ENCODE measurements at regions of chr3 and their contacts with region 1.

Region 1: DNA sequence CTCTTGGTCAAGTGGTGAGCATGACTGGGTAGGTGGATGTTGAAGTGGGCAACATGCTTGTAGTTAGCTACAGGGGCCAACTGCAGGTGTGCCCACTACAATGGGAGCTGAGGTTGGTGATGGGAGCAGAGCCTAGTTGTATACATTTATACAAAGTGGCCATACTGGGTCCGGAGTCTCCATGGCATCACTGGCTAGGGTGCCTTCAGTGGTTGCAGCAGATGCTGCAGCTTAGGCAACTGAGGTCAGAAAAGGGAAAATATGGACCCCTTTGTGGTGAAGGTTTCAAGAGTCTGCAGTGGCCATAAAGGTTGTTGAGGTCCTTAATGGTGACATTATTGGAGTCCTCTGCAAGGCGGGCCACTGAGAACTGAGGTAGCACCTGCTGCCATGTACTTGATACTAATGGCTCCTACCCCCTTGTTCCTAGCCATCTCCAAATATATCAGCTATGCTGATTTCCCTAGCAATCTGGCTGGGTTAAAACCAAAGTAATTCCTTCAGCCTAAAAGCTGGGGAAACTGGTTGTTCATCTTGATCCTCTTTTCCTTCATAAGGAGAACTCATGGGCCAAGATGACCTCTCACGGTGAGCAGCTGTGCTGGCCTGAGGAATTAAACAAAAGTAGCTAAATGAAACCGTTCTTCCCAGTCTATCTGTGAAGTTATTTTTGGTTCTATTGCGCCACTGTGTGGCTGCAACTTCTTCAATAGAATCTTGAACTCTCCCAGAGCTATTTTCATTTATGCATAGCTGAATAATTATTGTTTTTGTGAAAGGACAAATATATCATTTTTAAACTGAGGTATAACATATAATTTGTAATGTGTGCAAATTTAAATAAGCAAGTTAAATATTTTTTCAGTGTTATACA is 76.0 kb upstream of the PLSCR4 start:
- DNase-seq: peak; percentile 39 to 42
- H3K4me3 ChIP-seq: no peak overlapping the region
- H3K4me3 Mint-ChIP-seq: no peak overlapping the region
- H3K27ac Mint-ChIP-seq: no peak overlapping the region
- H3K4me1 ChIP-seq: no peaks in the 10 kb centered on the region
- H3K4me1 Mint-ChIP-seq: peaks cover 6% of the 10 kb centered on the region
- H3K27me3 ChIP-seq: no peaks in the 10 kb centered on the region
- H3K27me3 Mint-ChIP-seq: no peaks in the 10 kb centered on the region
- CTCF ChIP-seq: peak; percentile 42

Region 2: DNA sequence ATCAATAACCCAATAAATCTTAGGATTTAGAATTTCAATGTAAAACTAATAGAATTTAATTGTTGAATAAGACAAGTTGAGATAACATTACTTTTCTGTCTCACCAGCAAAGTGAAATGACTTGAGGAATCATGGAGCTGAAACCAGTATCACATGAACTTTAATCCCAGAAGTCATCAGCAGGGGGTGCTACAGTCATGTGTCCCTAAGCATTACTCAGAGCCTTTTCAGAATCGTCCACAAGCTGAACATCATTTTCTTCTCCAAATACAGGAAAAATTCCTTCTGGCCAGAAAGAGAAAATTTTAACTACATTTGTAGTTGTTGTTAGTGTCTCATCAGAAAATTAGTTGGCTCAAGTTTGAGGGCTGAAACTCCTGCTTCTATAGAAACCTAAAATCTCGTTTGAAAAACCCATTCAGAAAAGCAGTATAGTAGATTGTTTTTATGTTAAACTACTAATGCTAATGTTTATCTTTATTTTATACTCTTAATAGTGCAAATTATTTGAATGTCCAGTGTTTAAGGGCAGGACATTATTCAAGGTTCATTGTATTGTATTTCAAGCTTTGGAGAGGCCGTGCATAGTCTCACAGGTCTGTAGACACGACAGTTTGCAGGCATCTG is 550.0 kb before region 1 on chr3:
- CTCF ChIA-PET with region 1: interaction called, 3 read pairs
- POLR2A ChIA-PET with region 1: no interaction called
- intact Hi-C with region 1: loop called (anchors 5 kb)
- DNase-seq: peak in 1 of 2 experiments; percentile 66
- H3K4me3 ChIP-seq: no peak overlapping the region
- H3K4me3 Mint-ChIP-seq: no peak overlapping the region
- H3K27ac Mint-ChIP-seq: no peak overlapping the region
- H3K4me1 ChIP-seq: no peaks in the 10 kb centered on the region
- H3K4me1 Mint-ChIP-seq: peaks cover 2% of the 10 kb centered on the region
- H3K27me3 ChIP-seq: no peaks in the 10 kb centered on the region
- H3K27me3 Mint-ChIP-seq: peaks cover 8% of the 10 kb centered on the region
- CTCF ChIP-seq: peak; percentile 54 to 68

Region 3: DNA sequence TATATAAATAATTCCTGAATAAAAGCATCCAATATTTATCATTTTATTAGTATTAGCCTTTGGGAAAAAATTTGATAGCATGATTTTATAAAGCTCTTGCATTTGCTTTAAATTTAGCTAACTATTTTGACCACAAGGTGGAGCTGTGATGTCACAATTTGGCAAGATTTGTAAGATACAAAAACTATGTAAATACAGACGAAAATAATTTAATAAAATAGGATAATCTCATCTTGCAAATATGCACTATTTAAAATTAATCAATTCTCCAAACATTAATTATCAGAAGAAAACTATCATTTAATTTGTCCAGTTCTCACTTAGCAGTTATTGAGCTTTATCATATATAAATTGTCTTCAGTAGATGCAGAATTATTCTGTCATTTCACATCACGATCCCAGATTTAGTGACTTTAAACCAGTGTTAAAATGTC is 261.3 kb before region 1 on chr3:
- CTCF ChIA-PET with region 1: interaction called, 14 read pairs
- POLR2A ChIA-PET with region 1: no interaction called
- intact Hi-C with region 1: loop called (anchors 1 kb)
- DNase-seq: peak in 1 of 2 experiments; percentile 53
- H3K4me3 ChIP-seq: no peak overlapping the region
- H3K4me3 Mint-ChIP-seq: no peak overlapping the region
- H3K27ac Mint-ChIP-seq: no peak overlapping the region
- H3K4me1 ChIP-seq: no peaks in the 10 kb centered on the region
- H3K4me1 Mint-ChIP-seq: no peaks in the 10 kb centered on the region
- H3K27me3 ChIP-seq: no peaks in the 10 kb centered on the region
- H3K27me3 Mint-ChIP-seq: no peaks in the 10 kb centered on the region
- CTCF ChIP-seq: peak; percentile 68 to 69

Region 4: DNA sequence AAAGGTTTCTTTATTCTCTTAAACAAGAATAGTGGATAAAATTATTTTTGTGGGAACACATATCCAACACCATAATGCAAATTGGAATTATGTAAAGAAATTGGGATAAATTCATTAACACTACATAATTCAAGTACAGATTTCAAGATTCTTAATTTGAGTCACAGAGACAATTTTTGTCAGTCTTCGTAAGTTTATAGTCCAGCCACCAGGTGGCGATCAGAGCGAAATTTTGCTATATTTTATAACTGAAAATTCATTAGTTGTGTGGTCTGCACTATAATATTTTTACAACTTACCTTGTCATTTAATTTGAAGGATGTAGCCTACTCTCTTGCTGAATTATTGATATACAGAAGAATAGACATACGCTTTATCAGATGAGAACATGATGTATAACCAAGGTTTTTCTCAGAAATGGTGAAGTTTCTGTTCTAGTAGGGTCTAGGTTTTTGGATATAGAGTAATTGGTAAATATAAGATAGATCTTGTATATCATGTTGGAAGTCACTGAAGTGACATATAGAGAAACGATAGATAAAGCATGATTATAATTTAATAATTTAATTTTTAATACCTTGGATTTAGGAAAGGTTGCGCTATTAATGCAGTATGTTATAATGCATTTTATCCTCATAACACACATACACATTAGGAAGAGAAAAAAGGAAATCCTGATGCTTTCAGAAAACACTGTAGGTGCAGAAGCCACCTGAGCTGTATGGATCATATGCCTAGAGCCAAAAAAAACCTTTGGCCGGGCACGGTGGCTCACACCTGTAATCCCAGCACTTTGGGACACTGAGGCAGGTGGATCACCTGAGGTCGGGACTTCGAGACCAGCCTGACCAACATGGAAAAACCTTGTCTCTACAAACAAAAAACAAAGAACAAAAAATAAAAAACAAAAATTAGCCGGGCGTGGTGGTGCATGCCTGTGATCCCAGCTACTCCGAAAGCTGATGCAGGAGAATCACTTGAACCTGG is 107.7 kb before region 1 on chr3:
- CTCF ChIA-PET with region 1: interaction called, 68 read pairs
- POLR2A ChIA-PET with region 1: interaction called, 4 read pairs
- intact Hi-C with region 1: loop called (anchors 1 kb)
- DNase-seq: peak in 1 of 2 experiments; percentile 23
- H3K4me3 ChIP-seq: no peak overlapping the region
- H3K4me3 Mint-ChIP-seq: no peak overlapping the region
- H3K27ac Mint-ChIP-seq: no peak overlapping the region
- H3K4me1 ChIP-seq: peaks cover 40% of the 10 kb centered on the region
- H3K4me1 Mint-ChIP-seq: peaks cover 19% of the 10 kb centered on the region
- H3K27me3 ChIP-seq: no peaks in the 10 kb centered on the region
- H3K27me3 Mint-ChIP-seq: no peaks in the 10 kb centered on the region
- CTCF ChIP-seq: peak; percentile 61 to 74

Region 5: DNA sequence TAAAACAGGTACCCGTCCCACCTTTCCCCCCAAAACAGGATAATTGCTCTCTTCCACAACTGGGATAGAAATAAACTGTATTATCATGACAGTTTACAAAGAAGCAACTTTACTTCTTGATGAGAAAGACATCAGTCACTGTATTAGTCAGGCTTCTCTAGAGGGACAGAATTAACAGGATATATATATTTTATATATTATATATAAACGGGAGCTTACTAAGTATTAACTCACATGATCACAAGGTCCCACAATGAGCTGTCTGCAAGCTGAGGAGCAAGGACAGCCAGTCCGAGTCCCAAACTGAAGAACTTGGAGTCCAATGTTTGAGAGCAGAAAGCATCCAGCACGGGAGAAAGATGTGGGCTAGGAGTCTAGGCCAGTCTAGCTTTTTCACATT is 57.6 kb before region 1 on chr3:
- CTCF ChIA-PET with region 1: no interaction called
- POLR2A ChIA-PET with region 1: no interaction called
- intact Hi-C with region 1: no loop called
- DNase-seq: no peak
- H3K4me3 ChIP-seq: no peak overlapping the region
- H3K4me3 Mint-ChIP-seq: no peak overlapping the region
- H3K27ac Mint-ChIP-seq: no peak overlapping the region
- H3K4me1 ChIP-seq: no peaks in the 10 kb centered on the region
- H3K4me1 Mint-ChIP-seq: peaks cover under 1% of the 10 kb centered on the region
- H3K27me3 ChIP-seq: no peaks in the 10 kb centered on the region
- H3K27me3 Mint-ChIP-seq: no peaks in the 10 kb centered on the region
- CTCF ChIP-seq: no peak

Region 6: GRCh38 chr3:146283781-146284445 is 43.0 kb before region 1 on chr3:
- CTCF ChIA-PET with region 1: no interaction called
- POLR2A ChIA-PET with region 1: no interaction called
- intact Hi-C with region 1: loop called (anchors 1 kb)
- DNase-seq: peak; percentile 78 to 80
- H3K4me3 ChIP-seq: no peak overlapping the region
- H3K4me3 Mint-ChIP-seq: peak overlapping the region; percentile 66
- H3K27ac Mint-ChIP-seq: peak overlapping the region; percentile 95
- H3K4me1 ChIP-seq: peaks cover 40% of the 10 kb centered on the region
- H3K4me1 Mint-ChIP-seq: peaks cover 23% of the 10 kb centered on the region
- H3K27me3 ChIP-seq: no peaks in the 10 kb centered on the region
- H3K27me3 Mint-ChIP-seq: no peaks in the 10 kb centered on the region
- CTCF ChIP-seq: no peak

Region 7: DNA sequence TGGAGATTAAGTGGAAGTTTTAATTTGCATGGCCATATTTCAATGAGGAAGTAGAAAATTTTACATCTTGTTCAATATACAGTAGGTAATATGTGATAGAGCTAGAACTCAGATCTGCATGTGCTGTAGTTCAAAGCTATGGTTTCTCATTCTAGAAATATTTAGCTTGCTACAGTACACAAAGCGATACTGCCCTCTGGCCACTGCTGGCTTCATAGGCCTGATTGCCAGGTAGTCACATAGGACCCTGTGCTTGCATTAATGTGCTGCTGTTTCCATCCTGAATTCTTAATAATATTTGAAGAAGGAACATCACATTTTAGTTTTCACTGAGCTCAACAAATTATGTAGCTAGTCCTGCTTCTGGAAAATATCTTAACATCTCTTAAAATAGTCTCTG is 55.5 kb after region 1 on chr3:
- CTCF ChIA-PET with region 1: interaction called, 8 read pairs
- POLR2A ChIA-PET with region 1: no interaction called
- intact Hi-C with region 1: loop called (anchors 2 kb)
- DNase-seq: peak; percentile 34 to 45
- H3K4me3 ChIP-seq: no peak overlapping the region
- H3K4me3 Mint-ChIP-seq: no peak overlapping the region
- H3K27ac Mint-ChIP-seq: no peak overlapping the region
- H3K4me1 ChIP-seq: no peaks in the 10 kb centered on the region
- H3K4me1 Mint-ChIP-seq: peaks cover 7% of the 10 kb centered on the region
- H3K27me3 ChIP-seq: no peaks in the 10 kb centered on the region
- H3K27me3 Mint-ChIP-seq: no peaks in the 10 kb centered on the region
- CTCF ChIP-seq: peak; percentile 35 to 66

Region 8: DNA sequence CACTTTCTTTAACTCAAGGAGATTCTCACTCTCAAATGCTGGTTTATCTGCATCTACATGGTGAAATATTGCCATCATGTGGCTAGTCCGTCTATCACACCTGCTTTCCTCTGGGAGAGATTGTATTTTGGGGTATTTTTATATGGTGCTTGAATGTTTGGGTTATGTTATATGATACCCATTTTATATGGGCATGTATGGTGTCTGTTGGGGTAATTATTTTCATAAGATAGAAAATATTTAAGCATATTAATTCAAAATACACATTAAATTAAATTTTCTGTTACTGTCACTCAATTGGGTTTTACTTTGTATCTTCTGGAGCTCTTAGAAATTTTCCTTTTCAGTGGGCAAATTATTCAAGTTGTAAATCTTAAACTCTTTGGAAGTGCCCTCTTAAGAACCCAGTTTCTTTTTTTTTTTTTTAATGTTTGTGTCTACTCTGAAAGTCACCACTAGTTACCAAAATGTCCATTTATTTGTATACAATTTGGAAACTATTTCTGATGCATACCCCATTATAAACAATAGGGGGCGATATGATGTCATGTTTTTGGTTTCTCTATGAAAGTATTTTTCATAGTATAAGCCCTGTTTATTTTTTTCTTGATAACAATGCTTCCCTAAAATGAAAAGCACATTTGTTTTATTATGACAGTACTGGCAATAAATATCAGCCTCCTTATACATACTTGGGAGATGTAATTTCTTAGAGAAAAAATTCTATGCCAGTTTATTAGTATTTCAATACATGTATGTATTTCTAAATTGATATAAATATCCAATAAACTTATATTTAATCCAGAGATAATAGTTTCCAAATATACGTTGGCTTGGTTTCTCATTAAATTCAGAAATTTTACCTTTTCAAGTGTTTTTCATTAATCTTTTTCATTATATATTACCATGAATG is 314.3 kb after region 1 on chr3:
- CTCF ChIA-PET with region 1: no interaction called
- POLR2A ChIA-PET with region 1: no interaction called
- intact Hi-C with region 1: loop called (anchors 2 kb)
- DNase-seq: peak in 1 of 2 experiments; percentile 34
- H3K4me3 ChIP-seq: no peak overlapping the region
- H3K4me3 Mint-ChIP-seq: no peak overlapping the region
- H3K27ac Mint-ChIP-seq: no peak overlapping the region
- H3K4me1 ChIP-seq: peaks cover 6% of the 10 kb centered on the region
- H3K4me1 Mint-ChIP-seq: no peaks in the 10 kb centered on the region
- H3K27me3 ChIP-seq: no peaks in the 10 kb centered on the region
- H3K27me3 Mint-ChIP-seq: no peaks in the 10 kb centered on the region
- CTCF ChIP-seq: peak; percentile 33 to 54

Measured in Caco-2 (cell line).